CD4-positive, alpha-beta memory T cell (primary cell): ENCODE measurements at regions of chr17 and their contacts with region 1.

Region 1: DNA sequence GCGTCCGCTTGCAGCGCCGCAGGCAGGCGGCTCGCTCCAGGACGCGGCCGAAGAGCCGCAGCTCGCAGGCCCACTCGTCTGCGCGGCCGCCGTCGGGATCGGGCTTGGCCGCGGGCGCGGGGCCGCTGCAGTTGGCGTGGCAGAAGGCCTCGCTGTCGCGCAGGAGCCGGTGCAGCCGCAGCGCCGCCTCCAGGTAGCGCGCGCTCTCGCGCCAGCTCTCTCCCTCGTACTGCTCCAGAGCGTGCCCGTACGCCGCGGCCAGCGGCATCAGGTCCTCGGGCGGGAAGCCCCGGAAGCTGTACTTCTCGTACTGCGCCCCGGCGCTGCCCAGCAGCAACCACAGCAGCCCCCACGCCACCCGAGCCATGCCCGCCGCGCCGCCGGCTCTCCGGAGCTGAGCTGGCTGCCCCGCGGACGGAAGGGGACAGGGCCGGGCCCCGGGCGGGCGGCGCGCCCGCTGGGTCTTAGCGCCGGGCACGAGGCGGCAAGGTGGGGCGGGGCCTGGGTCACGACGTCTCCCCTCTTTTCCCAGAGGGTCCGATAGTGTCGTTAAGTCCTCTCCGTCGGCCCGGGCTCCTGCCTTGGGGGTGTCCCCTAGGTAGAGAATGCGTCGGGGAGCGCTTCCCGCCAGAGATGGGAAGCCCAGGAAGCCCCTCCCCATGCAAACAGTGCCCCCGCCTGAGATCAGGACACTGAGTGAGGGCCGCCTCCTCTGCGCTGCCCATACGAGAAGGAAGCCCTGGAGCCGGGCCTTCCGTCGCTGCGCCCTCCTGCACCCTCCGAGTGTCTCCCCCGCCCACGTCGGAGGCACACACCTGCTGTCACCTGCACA is at the start of gene P3H4:
- DNase-seq: peak; percentile 76 to 83 (median 80)
- H3K4me3 ChIP-seq: peak within 1 kb of the TSS; percentile 47 to 62
- H3K4me3 Mint-ChIP-seq: peak within 1 kb of the TSS; percentile 87 to 97 (median 92)
- H3K27ac ChIP-seq: peak within 1 kb of the TSS; percentile 45
- H3K27ac Mint-ChIP-seq: peak within 1 kb of the TSS; percentile 57 to 94 (median 75)
- H3K4me1 ChIP-seq: peaks cover 20% of the 10 kb centered on the region
- H3K4me1 Mint-ChIP-seq: peaks cover 14 to 28% (median 19%) of the 10 kb centered on the region in 4 donors
- H3K27me3 ChIP-seq: no peaks in the 10 kb centered on the region
- H3K27me3 Mint-ChIP-seq: no peaks in the 10 kb centered on the region
- total RNA-seq, gene P3H4: 5.9 to 6.8 TPM

Region 2: DNA sequence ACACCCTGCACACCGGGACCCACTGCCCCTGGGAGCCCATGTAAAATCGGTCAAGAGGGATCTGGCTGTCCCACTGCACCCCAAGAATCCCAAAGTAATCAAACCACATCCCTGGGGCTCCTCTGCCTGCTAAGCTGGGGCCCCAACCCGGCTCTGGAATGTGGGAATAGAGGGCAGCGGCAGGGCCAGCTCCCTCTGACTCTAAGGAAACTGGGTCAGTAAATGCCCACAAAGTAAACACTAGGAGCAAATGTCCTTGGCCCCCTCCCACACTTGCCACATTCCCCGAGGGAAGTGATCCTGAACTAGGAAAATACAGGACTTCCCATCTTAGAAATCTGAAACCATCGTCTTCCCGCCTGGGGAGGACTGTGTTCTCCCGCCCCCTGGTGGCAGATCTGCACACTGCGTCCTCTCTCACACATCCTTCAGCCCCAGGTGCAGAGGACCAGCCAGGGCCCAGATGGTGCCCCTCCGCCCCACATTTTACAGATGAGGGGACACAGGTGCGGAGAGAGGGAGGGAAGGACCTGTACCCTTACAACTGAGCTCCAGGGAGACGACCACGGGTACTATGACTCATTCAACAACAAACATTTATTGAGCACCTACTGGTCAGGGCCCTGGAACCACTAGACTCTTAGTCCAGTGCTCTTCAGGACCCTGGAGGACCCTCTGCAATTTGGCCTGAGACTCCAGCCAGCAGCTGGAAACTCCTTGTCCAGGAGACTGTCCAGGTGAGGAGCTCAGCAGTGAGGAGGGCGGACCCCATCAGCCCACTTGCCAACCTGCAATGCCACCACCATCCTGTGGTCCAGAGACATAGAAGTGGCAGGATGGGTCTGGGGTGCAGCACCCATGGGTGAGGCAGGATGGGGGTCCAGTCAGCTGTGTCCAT is 10.1 kb before region 1 on chr17:
- CTCF ChIA-PET with region 1: interaction called, 35 read pairs
- POLR2A ChIA-PET with region 1: interaction called, 8 read pairs
- intact Hi-C with region 1: loop called (anchors 1 kb)
- DNase-seq: peak; percentile 50 to 67 (median 62)
- H3K4me3 ChIP-seq: no peak overlapping the region
- H3K4me3 Mint-ChIP-seq: no peak overlapping the region
- H3K27ac ChIP-seq: no peak overlapping the region
- H3K27ac Mint-ChIP-seq: peak overlapping the region in 1 of 7 donors; percentile 57
- H3K4me1 ChIP-seq: no peaks in the 10 kb centered on the region
- H3K4me1 Mint-ChIP-seq: peaks cover 1 to 11% (median 5%) of the 10 kb centered on the region in 4 donors
- H3K27me3 ChIP-seq: no peaks in the 10 kb centered on the region
- H3K27me3 Mint-ChIP-seq: peaks cover 0 to 3% of the 10 kb centered on the region in 2 donors

Region 3: GRCh38 chr17:41835800-41836549 is 24.2 kb after region 1 on chr17 and contains the start of gene NT5C3B:
- CTCF ChIA-PET with region 1: interaction called, 10 read pairs
- POLR2A ChIA-PET with region 1: interaction called, 4 read pairs
- intact Hi-C with region 1: no loop called
- DNase-seq: peak in 4 of 5 donors; percentile 35 to 58 (median 42)
- H3K4me3 ChIP-seq: peak within 1 kb of the TSS; percentile 29 to 51
- H3K4me3 Mint-ChIP-seq: peak within 1 kb of the TSS; percentile 79 to 90 (median 88)
- H3K27ac ChIP-seq: peak within 1 kb of the TSS; percentile 52
- H3K27ac Mint-ChIP-seq: peak within 1 kb of the TSS in 6 of 7 donors; percentile 41 to 89 (median 74)
- H3K4me1 ChIP-seq: peaks cover 12% of the 10 kb centered on the region
- H3K4me1 Mint-ChIP-seq: peaks cover 10 to 18% (median 14%) of the 10 kb centered on the region in 4 donors
- H3K27me3 ChIP-seq: no peaks in the 10 kb centered on the region
- H3K27me3 Mint-ChIP-seq: no peaks in the 10 kb centered on the region
- total RNA-seq, gene NT5C3B: 20.9 to 22.3 TPM

Region 4: GRCh38 chr17:41864836-41865595 is 53.3 kb after region 1 on chr17 and contains the start of gene KLHL11:
- CTCF ChIA-PET with region 1: interaction called, 8 read pairs
- POLR2A ChIA-PET with region 1: interaction called, 25 read pairs
- intact Hi-C with region 1: no loop called
- DNase-seq: peak; percentile 85 to 88 (median 87)
- H3K4me3 ChIP-seq: peak within 1 kb of the TSS; percentile 26 to 78
- H3K4me3 Mint-ChIP-seq: peak within 1 kb of the TSS in 1 of 8 donors; percentile 82
- H3K27ac ChIP-seq: peak within 1 kb of the TSS; percentile 71
- H3K27ac Mint-ChIP-seq: peak within 1 kb of the TSS in 3 of 7 donors; percentile 89 to 93 (median 92)
- H3K4me1 ChIP-seq: peaks cover 42% of the 10 kb centered on the region
- H3K4me1 Mint-ChIP-seq: peaks cover 11 to 37% (median 19%) of the 10 kb centered on the region in 4 donors
- H3K27me3 ChIP-seq: no peaks in the 10 kb centered on the region
- H3K27me3 Mint-ChIP-seq: no peaks in the 10 kb centered on the region
- total RNA-seq, gene KLHL11: 20.6 to 20.8 TPM

Region 5: DNA sequence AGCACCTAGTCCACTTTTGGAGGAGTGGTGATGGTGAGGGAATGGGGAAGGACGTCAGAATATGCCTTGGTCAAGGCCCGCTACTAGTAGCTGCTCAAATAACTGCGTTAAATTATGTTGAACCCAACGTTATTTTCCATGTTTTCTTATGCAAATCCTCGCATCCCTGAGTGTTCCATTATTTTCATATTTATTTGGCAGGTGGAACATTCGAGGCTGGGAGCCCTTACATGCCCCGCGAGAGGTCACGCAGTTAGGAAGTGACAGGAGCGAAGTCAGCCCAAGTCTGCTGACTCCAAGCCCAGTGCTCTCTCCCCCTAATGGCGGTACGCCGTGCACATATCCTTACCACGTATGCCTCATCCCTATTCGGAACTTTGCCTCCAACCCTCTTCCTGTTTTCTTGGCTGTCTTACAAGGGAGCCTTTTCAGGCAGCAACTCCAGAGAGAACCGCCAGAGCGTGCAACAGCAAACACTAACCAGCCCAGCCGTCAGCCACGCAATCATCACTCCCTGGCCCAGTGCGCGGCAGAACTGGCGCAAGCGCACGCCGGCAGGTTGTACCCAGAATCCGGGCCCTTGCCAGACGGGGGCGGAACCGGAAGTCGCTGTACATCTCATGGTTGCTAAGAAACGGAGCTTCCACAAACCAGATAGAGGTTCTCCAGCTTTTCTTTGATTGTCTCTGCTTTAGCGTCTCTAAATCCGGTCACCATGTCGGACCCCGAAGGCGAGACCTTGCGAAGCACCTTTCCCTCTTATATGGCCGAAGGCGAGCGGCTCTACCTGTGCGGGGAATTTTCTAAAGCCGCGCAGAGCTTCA is 118.5 kb after region 1 on chr17 and contains the start of gene ODAD4:
- CTCF ChIA-PET with region 1: no interaction called
- POLR2A ChIA-PET with region 1: interaction called, 4 read pairs
- intact Hi-C with region 1: loop called (anchors 5 kb)
- DNase-seq: peak; percentile 94 to 98 (median 98)
- H3K4me3 ChIP-seq: peak within 1 kb of the TSS; percentile 73 to 80
- H3K4me3 Mint-ChIP-seq: peak within 1 kb of the TSS; percentile 90 to 99 (median 98)
- H3K27ac ChIP-seq: peak within 1 kb of the TSS; percentile 85
- H3K27ac Mint-ChIP-seq: peak within 1 kb of the TSS; percentile 91 to 100 (median 99)
- H3K4me1 ChIP-seq: peaks cover 23% of the 10 kb centered on the region
- H3K4me1 Mint-ChIP-seq: peaks cover 16 to 35% (median 23%) of the 10 kb centered on the region in 4 donors
- H3K27me3 ChIP-seq: no peaks in the 10 kb centered on the region
- H3K27me3 Mint-ChIP-seq: no peaks in the 10 kb centered on the region
- total RNA-seq, gene ODAD4: 0.20 TPM in 1 of 2 experiments, not detected in the other